GM13977 (cell line): ENCODE measurements at regions of chr21 and their contacts with region 1.

Region 1: GRCh38 chr21:42258153-42258884 is 39.4 kb downstream of the ABCG1 start:
- DNase-seq: peak; percentile 89
- CTCF ChIP-seq: peak; percentile 89

Region 2: GRCh38 chr21:41228021-41228400 is 1030.3 kb before region 1 on chr21:
- in situ Hi-C with region 1: no loop called
- DNase-seq: no peak
- CTCF ChIP-seq: no peak

Region 3: DNA sequence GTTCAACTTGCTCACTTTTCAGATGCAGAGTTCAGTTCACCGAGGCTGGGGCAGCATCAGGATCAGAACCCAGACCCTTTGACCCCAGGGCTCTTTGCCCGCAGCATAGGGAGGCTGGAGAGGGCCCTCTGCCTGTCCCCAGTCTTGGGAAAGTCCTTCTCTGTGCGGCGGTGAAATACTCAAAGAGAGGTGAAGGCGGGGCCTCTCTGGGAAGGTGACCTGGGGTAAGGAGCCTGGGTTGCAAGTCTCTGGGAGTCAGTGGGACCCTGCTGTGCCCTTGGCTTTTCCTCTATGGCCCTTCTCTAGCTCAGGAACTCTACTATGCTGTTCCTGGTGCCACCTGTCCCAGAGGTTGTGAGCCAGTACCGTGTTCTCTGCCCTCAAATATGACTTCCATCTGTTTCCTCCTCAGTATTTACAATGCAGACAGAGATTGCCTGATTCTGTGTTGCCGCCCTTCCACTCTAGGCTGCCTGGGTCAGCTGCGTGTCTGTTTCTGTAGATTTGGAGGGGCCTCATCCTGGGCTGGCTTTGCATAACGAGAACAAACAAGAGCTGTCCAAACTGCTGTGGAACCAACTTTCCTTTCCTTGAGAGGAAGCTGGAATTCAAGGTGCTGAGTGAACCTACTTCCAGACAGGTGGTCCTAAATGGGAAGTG is 229.4 kb before region 1 on chr21:
- in situ Hi-C with region 1: no loop called
- DNase-seq: no peak
- CTCF ChIP-seq: no peak

Region 4: GRCh38 chr21:42156690-42157577 is 101.4 kb before region 1 on chr21:
- in situ Hi-C with region 1: loop called (anchors 10 kb)
- DNase-seq: peak; percentile 9
- CTCF ChIP-seq: no peak

Region 5: DNA sequence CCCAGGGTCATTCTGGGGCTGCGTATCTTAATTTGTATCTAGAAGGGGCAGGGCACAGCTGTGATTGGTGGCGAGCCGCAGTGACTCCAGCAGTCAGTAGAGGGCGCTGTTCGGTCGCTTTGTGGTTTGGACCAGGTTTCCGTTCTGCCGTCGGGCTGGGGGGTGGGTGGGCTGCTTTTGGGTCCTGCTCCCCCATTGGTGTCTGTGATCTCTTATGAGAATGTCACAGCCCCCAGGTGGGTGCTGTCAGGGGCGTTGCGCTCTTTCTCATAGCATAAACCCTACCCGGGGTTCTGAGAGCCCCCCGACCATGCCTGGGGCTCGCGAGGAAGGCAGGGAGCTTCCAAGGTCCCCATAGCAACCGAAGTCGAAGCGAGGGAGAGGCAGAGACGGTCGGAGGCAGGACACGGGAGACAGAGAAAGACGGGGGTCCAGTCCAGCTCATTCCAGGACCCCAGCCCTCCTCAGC is 51.5 kb after region 1 on chr21:
- in situ Hi-C with region 1: no loop called
- DNase-seq: peak; percentile 88
- CTCF ChIP-seq: peak; percentile 91